Activated B cell treated with CpG ODN at 0.5 μM for 24 hours (primary cell): ENCODE measurements at regions of chr12 and their contacts with region 1.

Region 1: GRCh38 chr12:68040450-68041075 is 51.3 kb downstream of the IFNG-AS1 start:
- DNase-seq: no peak
- ATAC-seq: peak; percentile 65
- H3K4me3 Mint-ChIP-seq: peak overlapping the region; percentile 25
- H3K27ac Mint-ChIP-seq: peak overlapping the region; percentile 19
- H3K4me1 Mint-ChIP-seq: peaks cover 19% of the 10 kb centered on the region
- H3K27me3 Mint-ChIP-seq: no peaks in the 10 kb centered on the region
- CTCF ChIP-seq: peak; percentile 95

Region 2: GRCh38 chr12:67355578-67356379 is 684.8 kb before region 1 on chr12:
- CTCF ChIA-PET with region 1: interaction called, 10 read pairs
- POLR2A ChIA-PET with region 1: no interaction called
- intact Hi-C with region 1: loop called (anchors 1 kb)
- DNase-seq: no peak
- ATAC-seq: peak; percentile 54
- H3K4me3 Mint-ChIP-seq: no peak overlapping the region
- H3K27ac Mint-ChIP-seq: no peak overlapping the region
- H3K4me1 Mint-ChIP-seq: peaks cover 5% of the 10 kb centered on the region
- H3K27me3 Mint-ChIP-seq: no peaks in the 10 kb centered on the region
- CTCF ChIP-seq: no peak

Region 3: DNA sequence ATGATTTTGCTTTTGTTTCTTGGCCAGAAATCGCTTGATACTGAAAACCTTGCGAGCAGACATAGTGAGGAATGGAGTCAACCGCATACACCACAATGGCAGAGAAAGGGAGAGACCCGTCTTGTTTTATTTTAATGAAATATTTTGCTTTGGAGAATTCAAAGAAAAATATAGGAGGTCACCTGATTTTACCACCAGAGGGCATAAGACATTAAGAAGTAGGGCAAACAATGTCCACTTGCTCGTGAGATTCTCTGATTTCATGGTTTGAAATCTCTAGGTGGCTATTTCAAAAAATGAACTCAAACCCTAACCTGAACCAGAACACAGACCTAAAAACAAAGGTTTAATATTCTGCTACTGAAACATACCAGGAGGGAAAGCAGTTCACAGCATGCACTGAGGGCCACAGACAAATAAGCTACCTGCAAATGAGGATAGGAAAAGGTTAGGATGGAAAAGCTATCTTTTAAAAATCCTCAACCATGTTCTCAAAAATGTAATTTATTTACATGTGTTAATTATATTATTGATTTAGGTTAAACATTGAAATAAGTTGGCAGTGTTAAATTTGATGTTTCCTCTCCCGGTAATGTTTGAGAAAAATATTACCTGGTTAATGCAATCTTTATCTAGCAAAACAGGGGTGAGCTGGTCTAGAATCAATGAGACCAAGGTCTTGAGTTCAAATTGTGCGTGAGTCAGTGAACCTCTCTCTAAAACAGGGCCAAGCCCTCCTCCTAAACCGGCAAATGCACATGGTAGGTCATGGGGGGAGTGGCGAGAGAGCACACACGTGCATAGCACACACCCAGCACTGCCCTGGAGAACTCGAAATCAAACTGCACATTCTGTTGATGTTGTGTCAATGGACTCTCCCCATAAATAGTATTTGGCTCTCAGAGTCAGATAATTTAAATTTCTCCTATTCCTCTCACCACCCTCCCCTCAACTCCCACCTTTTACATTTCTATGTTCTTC is 38.8 kb before region 1 on chr12:
- CTCF ChIA-PET with region 1: interaction called, 3 read pairs
- POLR2A ChIA-PET with region 1: no interaction called
- intact Hi-C with region 1: loop called (anchors 1 kb)
- DNase-seq: no peak
- ATAC-seq: peak; percentile 37
- H3K4me3 Mint-ChIP-seq: no peak overlapping the region
- H3K27ac Mint-ChIP-seq: no peak overlapping the region
- H3K4me1 Mint-ChIP-seq: peaks cover 10% of the 10 kb centered on the region
- H3K27me3 Mint-ChIP-seq: no peaks in the 10 kb centered on the region
- CTCF ChIP-seq: no peak

Region 4: DNA sequence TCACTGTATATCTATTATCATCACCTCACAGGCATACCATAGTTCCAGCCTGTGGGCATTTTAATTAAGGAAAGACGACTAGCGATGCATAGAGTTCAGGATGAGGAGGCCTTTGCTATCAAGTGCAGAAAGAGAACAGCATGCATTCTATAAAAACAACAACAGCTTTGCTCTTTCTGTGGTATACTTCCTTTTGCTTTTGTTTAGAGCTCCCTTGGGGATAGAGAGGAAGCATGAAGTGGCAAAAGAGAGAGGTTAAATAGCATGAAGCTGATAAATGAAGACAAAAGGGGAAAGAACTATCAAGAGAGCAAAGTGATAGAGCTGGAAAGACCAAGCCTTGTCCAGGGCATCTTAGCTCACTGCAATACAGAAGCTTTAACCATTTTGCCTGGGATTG is 27.9 kb before region 1 on chr12:
- CTCF ChIA-PET with region 1: interaction called, 5 read pairs
- POLR2A ChIA-PET with region 1: no interaction called
- intact Hi-C with region 1: loop called (anchors 1 kb)
- DNase-seq: no peak
- ATAC-seq: peak; percentile 90
- H3K4me3 Mint-ChIP-seq: peak overlapping the region; percentile 25
- H3K27ac Mint-ChIP-seq: peak overlapping the region; percentile 56
- H3K4me1 Mint-ChIP-seq: peaks cover 40% of the 10 kb centered on the region
- H3K27me3 Mint-ChIP-seq: no peaks in the 10 kb centered on the region
- CTCF ChIP-seq: no peak

Region 5: GRCh38 chr12:68158432-68158831 is 117.9 kb after region 1 on chr12:
- CTCF ChIA-PET with region 1: interaction called, 19 read pairs
- POLR2A ChIA-PET with region 1: no interaction called
- intact Hi-C with region 1: loop called (anchors 2 kb)
- DNase-seq: no peak
- ATAC-seq: no peak
- H3K4me3 Mint-ChIP-seq: no peak overlapping the region
- H3K27ac Mint-ChIP-seq: no peak overlapping the region
- H3K4me1 Mint-ChIP-seq: peaks cover 11% of the 10 kb centered on the region
- H3K27me3 Mint-ChIP-seq: no peaks in the 10 kb centered on the region
- CTCF ChIP-seq: no peak

Region 6: DNA sequence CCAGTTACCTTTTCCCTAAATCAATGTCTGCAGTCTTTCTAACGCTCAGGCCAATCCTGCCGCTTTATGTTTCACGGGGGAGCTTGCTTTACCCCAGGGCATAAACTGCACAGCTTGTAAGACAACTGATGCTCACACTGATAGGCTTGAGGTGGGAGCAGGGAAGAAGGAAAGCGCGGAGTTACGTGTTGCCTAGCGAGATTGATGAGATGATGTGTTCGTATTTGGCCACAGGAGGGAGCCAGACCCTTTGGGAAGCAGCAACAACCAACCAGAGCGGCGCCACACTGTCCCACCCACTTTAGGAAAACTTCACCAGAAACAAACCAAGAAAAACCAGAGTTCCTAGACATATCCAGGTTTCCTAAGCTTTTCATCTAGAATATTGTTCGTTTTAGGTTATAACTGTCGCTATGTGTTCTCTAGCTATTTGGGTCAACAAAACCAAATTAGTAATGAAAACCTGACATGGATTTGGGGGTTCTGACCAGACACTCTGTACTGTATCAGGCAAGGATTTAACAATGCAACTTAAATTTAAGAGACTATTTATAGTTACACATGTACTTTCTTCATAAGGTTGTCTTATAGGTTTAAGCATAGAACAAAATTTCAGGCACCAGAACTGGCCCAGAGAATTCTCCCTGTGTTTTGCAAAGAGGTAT is 182.7 kb after region 1 on chr12:
- CTCF ChIA-PET with region 1: interaction called, 6 read pairs
- POLR2A ChIA-PET with region 1: no interaction called
- intact Hi-C with region 1: loop called (anchors 1 kb)
- DNase-seq: peak; percentile 29
- ATAC-seq: peak; percentile 99
- H3K4me3 Mint-ChIP-seq: peak overlapping the region; percentile 48
- H3K27ac Mint-ChIP-seq: no peak overlapping the region
- H3K4me1 Mint-ChIP-seq: peaks cover 5% of the 10 kb centered on the region
- H3K27me3 Mint-ChIP-seq: peaks cover 3% of the 10 kb centered on the region
- CTCF ChIP-seq: no peak

Region 7: GRCh38 chr12:68317047-68317667 is 276.6 kb after region 1 on chr12:
- CTCF ChIA-PET with region 1: interaction called, 17 read pairs
- POLR2A ChIA-PET with region 1: no interaction called
- intact Hi-C with region 1: loop called (anchors 1 kb)
- DNase-seq: no peak
- ATAC-seq: no peak
- H3K4me3 Mint-ChIP-seq: no peak overlapping the region
- H3K27ac Mint-ChIP-seq: no peak overlapping the region
- H3K4me1 Mint-ChIP-seq: no peaks in the 10 kb centered on the region
- H3K27me3 Mint-ChIP-seq: no peaks in the 10 kb centered on the region
- CTCF ChIP-seq: peak; percentile 83